Thyroid gland (tissue), 4 donors: ENCODE measurements at regions of chr14 and their contacts with region 1.

Region 1: DNA sequence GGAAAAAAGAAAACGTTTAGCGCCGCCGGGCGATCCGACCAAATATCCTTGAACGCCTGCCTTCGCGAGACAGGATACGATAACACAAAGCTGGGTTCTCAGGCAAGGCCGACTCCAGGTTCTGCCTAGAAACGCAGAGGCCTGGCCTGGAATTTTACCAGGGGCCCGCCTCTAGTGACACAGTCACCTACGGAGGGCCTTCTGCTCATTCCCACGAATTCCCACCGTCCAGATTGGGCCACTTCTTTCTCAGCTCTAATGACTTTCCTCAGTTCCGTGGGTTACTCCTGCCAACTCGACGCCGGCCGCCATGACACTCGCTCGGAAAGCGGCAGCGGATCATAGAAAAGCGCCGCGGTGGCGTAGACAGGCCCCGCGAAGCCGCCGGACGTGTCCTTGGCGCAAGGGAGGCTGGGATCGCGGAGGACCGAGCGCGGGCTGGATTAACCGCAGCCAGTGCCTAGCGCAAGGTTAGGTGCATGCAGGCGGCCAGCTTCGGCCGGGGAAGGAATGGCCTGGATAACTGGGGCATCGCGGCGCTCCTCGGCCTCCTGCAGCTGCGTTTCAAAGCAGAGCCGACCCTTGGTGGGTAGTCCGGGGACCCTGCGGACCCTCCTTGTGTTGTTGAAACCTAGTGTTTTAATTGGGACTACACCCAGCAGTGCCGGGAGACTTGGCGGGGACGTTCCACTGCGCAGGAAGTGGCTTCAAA is at the start of gene TRIP11:
- DNase-seq: peak; percentile 92 to 96
- H3K4me3 ChIP-seq: peak within 1 kb of the TSS; percentile 73 to 97 (median 95)
- H3K27ac ChIP-seq: peak within 1 kb of the TSS; percentile 94 to 97 (median 95)
- H3K4me1 ChIP-seq: peaks cover 13 to 32% of the 10 kb centered on the region in 2 donors
- H3K27me3 ChIP-seq: no peaks in the 10 kb centered on the region
- CTCF ChIP-seq: peak in 1 of 6 experiments; percentile 30
- POLR2A ChIP-seq: peak in 1 of 2 donors; percentile 85
- total RNA-seq, gene TRIP11: 35.5 to 45.1 (median 41.7) TPM

Region 2: DNA sequence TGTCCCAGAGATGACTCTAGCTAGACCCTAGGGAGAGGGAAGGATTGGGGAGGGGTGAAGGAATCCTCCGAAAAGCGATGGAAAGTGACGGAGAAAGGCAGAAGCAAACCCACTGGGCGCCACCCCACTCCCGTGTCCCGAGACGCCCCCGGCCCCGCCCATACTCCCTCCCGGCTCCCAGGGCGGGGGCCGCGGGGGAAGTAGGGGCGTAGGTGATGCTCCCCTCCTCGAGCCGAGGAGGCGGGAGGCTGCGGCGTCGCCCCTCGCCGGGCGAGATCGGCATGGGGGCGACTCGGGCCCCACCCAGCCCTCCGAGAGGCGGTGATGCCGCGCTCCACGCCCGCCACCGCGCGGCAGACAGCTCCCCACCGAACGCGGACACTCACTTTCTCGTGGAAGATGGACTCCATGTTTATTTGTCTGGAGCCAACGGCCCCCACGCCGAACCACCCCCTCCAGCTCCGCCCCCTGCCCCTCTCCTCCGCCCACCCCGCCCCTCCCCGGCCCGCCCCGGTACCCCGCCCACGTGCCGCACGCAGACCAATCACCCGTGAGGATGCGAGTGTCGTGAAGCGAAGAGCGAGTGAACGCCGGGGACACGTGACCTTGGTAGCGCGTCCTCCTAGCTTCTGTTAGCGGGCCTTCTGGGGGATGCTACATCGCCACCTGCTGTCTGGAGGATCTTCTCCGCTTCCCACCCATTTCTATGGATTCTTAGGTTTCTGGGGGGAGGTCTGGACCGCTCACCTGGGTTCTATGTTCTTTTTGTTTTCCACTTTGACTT is 66.5 kb after region 1 on chr14 and contains the start of gene ATXN3:
- intact Hi-C with region 1: loop called (anchors 10 kb)
- DNase-seq: peak; percentile 98
- H3K4me3 ChIP-seq: peak within 1 kb of the TSS; percentile 78 to 94 (median 80)
- H3K27ac ChIP-seq: peak within 1 kb of the TSS; percentile 89 to 95 (median 91)
- H3K4me1 ChIP-seq: peaks cover 10 to 13% of the 10 kb centered on the region in 2 donors
- H3K27me3 ChIP-seq: no peaks in the 10 kb centered on the region
- CTCF ChIP-seq: peak; percentile 27 to 82 (median 60)
- POLR2A ChIP-seq: peak in 1 of 2 donors; percentile 66
- total RNA-seq, gene ATXN3: 28.0 to 76.7 (median 31.8) TPM

Region 3: DNA sequence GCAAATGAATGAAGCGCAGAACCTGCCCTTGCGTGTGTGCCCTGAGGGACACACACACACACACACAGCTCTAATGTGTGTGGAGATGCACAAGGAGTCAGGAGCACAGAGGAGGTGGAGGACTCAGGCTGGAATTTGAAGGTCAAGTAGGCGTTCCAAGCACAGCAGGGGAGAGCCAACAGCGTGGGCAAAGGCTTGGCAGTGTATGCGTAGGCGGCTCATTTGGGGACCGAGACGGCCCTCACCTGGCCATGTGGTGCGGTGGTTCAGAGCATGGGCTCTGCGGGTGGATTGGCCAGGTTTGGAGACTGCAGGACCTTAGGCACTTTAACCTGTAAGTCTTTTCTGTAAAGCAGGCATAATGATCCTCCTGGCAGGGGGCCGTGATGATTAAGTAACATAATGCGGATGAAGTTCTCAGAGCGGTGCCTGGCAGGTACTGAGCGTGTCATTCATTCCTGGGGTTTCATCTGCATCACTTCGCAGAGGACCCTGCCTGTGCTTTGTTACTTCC is 213.6 kb after region 1 on chr14:
- intact Hi-C with region 1: no loop called
- DNase-seq: peak; percentile 9 to 45
- H3K4me3 ChIP-seq: no peak overlapping the region
- H3K27ac ChIP-seq: no peak overlapping the region
- H3K4me1 ChIP-seq: no peaks in the 10 kb centered on the region
- H3K27me3 ChIP-seq: no peaks in the 10 kb centered on the region
- CTCF ChIP-seq: no peak
- POLR2A ChIP-seq: no peak

Region 4: DNA sequence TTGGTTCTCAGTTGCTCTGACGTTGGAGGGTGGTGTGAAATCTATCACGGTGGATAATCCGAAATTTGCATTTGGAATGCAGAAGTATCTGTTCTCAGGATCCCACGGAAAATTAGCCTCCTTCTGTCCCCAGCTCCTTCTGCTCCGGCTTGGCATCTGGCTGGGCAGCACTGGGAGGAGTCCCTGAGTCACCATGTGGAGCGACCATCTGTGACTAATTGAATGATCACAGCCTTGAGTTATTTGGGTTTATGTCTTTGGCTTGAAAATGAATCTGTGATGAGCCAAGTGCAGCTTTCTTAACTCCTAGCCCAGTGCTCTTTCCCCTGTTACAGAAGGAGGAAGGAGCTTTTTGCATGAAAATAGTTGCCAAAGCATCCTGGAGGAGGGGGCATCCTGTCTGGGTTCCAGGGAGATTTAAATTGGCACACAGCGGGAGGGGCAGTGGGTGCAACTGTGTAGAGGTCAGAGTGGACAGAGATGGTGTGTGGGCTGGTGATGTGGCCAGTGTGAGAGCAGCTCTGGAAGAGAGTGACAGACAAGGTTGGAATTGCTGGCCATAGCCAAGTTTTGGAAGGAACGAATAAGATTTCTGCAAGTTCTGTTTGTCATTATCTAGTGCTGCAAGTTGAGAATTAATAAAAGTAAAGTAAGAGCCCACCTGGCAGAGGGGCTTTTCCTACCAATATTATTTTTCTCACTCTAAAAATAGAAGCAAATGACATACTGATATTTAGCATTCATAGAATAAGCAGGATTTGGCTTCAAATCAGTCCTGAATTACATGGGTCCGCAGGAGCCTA is 357.5 kb after region 1 on chr14:
- intact Hi-C with region 1: no loop called
- DNase-seq: no peak
- H3K4me3 ChIP-seq: no peak overlapping the region
- H3K27ac ChIP-seq: no peak overlapping the region
- H3K4me1 ChIP-seq: no peaks in the 10 kb centered on the region
- H3K27me3 ChIP-seq: no peaks in the 10 kb centered on the region
- CTCF ChIP-seq: no peak
- POLR2A ChIP-seq: no peak